ENCODE measurements at regions of chr6 and their contacts with region 1.

Region 1: DNA sequence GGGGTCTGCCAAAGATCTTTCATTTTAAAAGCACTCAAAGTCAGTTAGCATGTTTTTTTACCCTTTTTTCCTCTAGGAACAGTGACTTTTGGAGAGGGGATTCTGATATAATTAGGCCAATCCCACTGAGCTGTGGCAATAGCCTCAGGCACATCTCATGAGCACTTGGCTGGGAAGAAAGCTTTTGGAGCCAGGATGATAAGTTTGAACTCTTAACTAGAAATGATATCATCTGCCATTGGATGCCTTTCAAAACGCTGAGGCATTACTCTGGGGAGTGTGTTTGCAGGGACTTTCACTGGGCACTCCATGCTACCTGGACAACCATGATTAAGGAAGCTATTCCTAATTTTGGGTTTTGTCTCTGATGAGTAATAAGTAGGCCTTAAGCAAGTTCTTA is 3.7 kb downstream of the SCGN start:
- DNase-seq: no peak
- H3K4me3 ChIP-seq: no peak overlapping the region
- H3K27ac ChIP-seq: no peak overlapping the region
- H3K4me1 ChIP-seq: no peaks in the 10 kb centered on the region; a peak in 2 of 7 replicates
- H3K27me3 ChIP-seq: peaks cover 4 to 10% (median 6%) of the 10 kb centered on the region in 4 experiments; a peak in 4 of 7 replicates
- CTCF ChIP-seq: no peak
- EP300 ChIP-seq: no peak
- POLR2A ChIP-seq: no peak
- RAD21 ChIP-seq: no peak

Region 2: DNA sequence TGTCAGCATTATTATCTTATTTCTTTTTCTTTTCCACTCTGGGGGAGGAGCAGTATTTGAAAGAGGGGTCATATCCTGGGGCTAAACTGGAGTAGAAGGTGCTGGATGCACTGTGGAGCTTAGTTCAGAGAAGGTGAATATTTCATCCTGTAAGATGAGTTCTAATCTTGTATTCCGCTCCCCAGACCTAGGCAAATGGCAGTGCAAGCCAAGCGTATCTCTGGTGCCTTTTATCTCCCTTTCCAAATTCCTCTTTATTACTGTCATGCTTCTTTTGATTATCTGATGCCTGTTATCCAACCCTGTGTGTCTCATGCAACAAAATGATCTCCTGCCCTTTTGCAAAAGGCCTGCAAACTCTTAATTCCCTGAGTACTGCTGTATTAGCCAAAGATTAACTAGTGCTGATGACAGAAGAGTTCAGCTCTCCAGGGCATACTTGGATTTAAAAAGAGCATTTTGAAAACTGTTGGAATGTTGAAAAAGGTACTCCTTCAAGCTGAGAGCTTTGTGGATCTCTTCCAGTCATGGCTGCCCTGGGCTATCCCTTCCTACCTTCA is 238.6 kb before region 1 on chr6:
- CTCF ChIA-PET with region 1: no interaction called
- POLR2A ChIA-PET with region 1: no interaction called
- DNase-seq: no peak
- H3K4me3 ChIP-seq: no peak overlapping the region
- H3K27ac ChIP-seq: no peak overlapping the region
- H3K4me1 ChIP-seq: peaks cover 0 to 19% (median 16%) of the 10 kb centered on the region in 4 experiments; a peak in 4 of 7 replicates
- H3K27me3 ChIP-seq: no peaks in the 10 kb centered on the region
- CTCF ChIP-seq: no peak
- EP300 ChIP-seq: no peak
- POLR2A ChIP-seq: no peak
- RAD21 ChIP-seq: no peak

Region 3: GRCh38 chr6:25640446-25640845 is 15.3 kb before region 1 on chr6:
- CTCF ChIA-PET with region 1: interaction called, 10 read pairs
- POLR2A ChIA-PET with region 1: no interaction called
- DNase-seq: no peak
- H3K4me3 ChIP-seq: no peak overlapping the region
- H3K27ac ChIP-seq: no peak overlapping the region
- H3K4me1 ChIP-seq: no peaks in the 10 kb centered on the region; a peak in 1 of 7 replicates
- H3K27me3 ChIP-seq: peaks cover 0 to 2% (median 0%) of the 10 kb centered on the region in 4 experiments; a peak in 1 of 7 replicates
- CTCF ChIP-seq: no peak
- EP300 ChIP-seq: no peak
- POLR2A ChIP-seq: no peak
- RAD21 ChIP-seq: no peak